ENCODE measurements at regions of chr2 and their contacts with region 1.

Region 1: DNA sequence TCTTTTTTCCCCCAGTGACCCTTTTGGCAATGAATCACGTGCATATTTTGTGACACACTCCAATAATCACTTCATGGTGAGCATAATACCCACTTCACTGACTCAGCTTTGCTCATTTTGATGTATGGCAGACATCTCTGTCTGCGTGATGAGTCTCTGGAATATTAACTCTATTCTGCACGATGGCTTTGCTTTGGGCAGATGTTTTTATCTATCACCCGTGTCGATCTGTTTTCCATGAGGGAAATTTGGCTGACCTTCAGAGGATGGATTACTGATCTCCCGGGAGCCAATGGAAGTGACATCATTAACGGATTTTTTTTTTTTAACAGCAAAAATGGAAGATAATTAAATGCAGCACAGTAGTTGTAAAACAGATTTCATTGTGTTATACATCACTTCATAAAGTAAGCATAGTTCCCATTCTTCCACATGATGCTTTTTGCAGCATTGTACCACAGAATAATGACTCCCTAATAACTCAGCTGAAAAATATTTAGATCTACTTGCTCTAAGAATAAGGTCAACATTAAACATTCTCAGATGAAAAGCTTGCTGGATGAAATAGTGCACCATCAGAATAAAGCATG is 29.8 kb downstream of the CDC42EP3 start:
- DNase-seq: no peak
- H3K4me3 ChIP-seq: no peak overlapping the region
- H3K27ac ChIP-seq: no peak overlapping the region
- H3K4me1 ChIP-seq: peaks cover 41% of the 10 kb centered on the region
- H3K27me3 ChIP-seq: no peaks in the 10 kb centered on the region
- CTCF ChIP-seq: no peak
- POLR2A ChIP-seq: no peak

Region 2: DNA sequence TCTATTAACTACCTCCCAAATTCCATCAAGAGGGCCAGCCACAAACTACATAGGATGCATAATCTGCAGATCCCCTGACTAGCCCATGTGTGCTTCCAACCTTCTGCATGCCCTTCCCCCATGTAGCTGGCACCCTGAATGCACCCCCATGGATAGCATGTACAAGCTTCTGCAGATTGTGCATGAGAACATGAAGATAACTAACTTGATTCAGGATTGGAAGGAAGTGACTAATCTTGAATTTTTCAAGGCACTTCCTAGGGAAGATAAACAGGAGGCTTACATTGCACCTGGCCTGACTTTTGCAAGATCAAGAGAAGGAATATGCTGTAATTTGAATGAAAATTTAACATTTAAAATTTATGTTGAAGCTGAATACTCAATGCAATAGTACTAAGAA is 37.0 kb before region 1 on chr2:
- CTCF ChIA-PET with region 1: no interaction called
- POLR2A ChIA-PET with region 1: no interaction called
- dilution Hi-C with region 1: no loop called
- intact Hi-C with region 1: loop called (anchors 2 kb)
- DNase-seq: peak; percentile 72
- H3K4me3 ChIP-seq: no peak overlapping the region
- H3K27ac ChIP-seq: no peak overlapping the region
- H3K4me1 ChIP-seq: peaks cover 14% of the 10 kb centered on the region
- H3K27me3 ChIP-seq: no peaks in the 10 kb centered on the region
- CTCF ChIP-seq: no peak
- POLR2A ChIP-seq: no peak

Region 3: GRCh38 chr2:37614061-37614738 is 27.5 kb before region 1 on chr2:
- CTCF ChIA-PET with region 1: interaction called, 3 read pairs
- POLR2A ChIA-PET with region 1: no interaction called
- dilution Hi-C with region 1: no loop called
- intact Hi-C with region 1: loop called (anchors 1 kb)
- DNase-seq: peak; percentile 26
- H3K4me3 ChIP-seq: no peak overlapping the region
- H3K27ac ChIP-seq: no peak overlapping the region
- H3K4me1 ChIP-seq: peaks cover 8% of the 10 kb centered on the region
- H3K27me3 ChIP-seq: no peaks in the 10 kb centered on the region
- CTCF ChIP-seq: no peak
- POLR2A ChIP-seq: no peak